Panc1 (cell line): ENCODE measurements at regions of chr11 and their contacts with region 1.

Region 1: DNA sequence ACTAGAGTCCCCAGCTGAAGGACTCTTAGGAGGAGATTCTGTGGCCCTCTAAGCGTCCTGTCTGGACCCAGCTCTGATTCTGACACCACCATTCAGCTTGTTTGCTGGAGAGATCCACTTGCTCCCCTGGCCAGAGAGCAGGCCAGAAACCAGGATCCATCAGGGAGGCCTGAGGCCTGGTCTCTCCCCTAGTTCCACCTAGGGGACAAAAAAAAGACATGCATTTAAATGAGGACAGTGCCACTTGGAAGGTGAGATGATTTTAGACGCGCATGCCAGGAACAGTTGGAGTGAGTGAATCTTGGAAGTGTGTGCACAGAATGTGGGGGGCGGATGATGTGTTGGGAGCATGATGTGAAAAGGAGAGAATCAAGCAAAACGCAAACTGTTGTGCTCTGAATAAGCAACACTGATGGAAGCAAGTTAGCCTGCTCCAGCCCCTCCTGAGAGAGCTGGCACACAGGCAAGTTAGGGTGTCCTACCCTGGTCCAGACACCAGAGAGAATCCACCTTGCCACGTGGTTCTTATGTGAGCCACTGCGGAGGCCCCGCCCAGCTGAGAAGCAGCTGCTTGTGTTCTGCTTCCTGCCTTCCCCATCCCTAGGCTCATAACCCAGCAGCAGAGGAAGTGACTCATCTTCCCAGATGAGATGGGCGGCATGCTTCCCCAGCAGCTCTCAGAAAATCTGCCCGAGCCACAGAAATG is 8.0 kb upstream of the SLCO2B1 start:
- DNase-seq: peak; percentile 68
- ATAC-seq: peak; percentile 87
- H3K4me3 ChIP-seq: no peak overlapping the region
- H3K27ac ChIP-seq: no peak overlapping the region; the same call in 1 of the 2 replicates
- H3K4me1 ChIP-seq: peaks cover 10% of the 10 kb centered on the region
- H3K27me3 ChIP-seq: no peaks in the 10 kb centered on the region; the same call in 1 of the 2 replicates
- CTCF ChIP-seq: no peak

Region 2: DNA sequence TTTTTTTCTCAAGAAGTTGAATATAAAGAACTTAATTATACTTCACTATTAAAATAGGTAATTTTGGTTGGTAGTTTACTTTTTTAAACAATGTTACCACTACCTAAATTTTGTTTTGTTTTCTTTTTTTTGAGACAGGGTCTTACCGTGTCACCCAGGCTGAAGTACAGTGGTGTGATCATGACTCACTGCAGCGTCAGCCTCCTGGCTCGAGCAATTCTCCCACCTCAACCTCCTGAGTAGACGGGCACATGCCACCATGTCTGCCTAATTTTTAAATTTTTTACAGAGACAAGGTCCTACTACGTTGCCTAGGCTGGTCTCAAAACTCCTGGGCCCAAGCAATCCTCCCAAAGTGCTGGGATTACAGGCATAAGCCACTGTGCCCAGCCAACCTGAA is 176.2 kb before region 1 on chr11:
- CTCF ChIA-PET with region 1: no interaction called
- POLR2A ChIA-PET with region 1: no interaction called
- in situ Hi-C with region 1: no loop called
- intact Hi-C with region 1: no loop called
- DNase-seq: peak; percentile 57
- ATAC-seq: peak; percentile 81
- H3K4me3 ChIP-seq: no peak overlapping the region
- H3K27ac ChIP-seq: no peak overlapping the region
- H3K4me1 ChIP-seq: no peaks in the 10 kb centered on the region
- H3K27me3 ChIP-seq: no peaks in the 10 kb centered on the region
- CTCF ChIP-seq: no peak

Region 3: GRCh38 chr11:75100314-75100713 is 42.6 kb before region 1 on chr11:
- CTCF ChIA-PET with region 1: no interaction called
- POLR2A ChIA-PET with region 1: no interaction called
- in situ Hi-C with region 1: no loop called
- intact Hi-C with region 1: no loop called
- DNase-seq: no peak
- ATAC-seq: peak; percentile 82
- H3K4me3 ChIP-seq: no peak overlapping the region
- H3K27ac ChIP-seq: no peak overlapping the region
- H3K4me1 ChIP-seq: no peaks in the 10 kb centered on the region
- H3K27me3 ChIP-seq: peaks cover 6% of the 10 kb centered on the region
- CTCF ChIP-seq: no peak

Region 4: DNA sequence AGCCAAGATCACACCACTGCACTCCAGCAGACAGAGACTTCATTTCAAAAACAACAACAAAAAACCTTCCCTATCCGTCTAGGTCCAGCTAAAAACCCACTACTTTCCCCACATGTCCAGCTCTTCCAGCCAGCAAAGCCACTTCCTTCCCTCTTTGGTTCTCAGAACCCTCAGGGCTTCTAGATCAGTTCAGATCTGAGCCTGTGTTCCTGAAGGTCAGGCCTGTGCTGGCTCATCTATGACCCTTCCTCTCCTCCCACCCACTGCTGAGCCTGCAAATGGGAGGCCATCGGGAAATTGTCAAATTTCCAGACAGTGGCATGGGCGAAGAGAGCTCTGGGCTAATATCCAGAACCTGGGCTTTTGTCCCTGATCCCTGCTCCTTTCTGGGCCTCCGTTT is 45.8 kb after region 1 on chr11:
- CTCF ChIA-PET with region 1: interaction called, 3 read pairs
- POLR2A ChIA-PET with region 1: interaction called, 10 read pairs
- in situ Hi-C with region 1: no loop called
- intact Hi-C with region 1: no loop called
- DNase-seq: no peak
- ATAC-seq: no peak
- H3K4me3 ChIP-seq: no peak overlapping the region
- H3K27ac ChIP-seq: no peak overlapping the region
- H3K4me1 ChIP-seq: no peaks in the 10 kb centered on the region
- H3K27me3 ChIP-seq: 0 out of 2 replicates have a peak, but pooled peaks cover 3% of the 10 kb centered on the region
- CTCF ChIP-seq: no peak

Region 5: GRCh38 chr11:75204685-75205563 is 62.1 kb after region 1 on chr11:
- CTCF ChIA-PET with region 1: interaction called, 59 read pairs
- POLR2A ChIA-PET with region 1: interaction called, 5 read pairs
- in situ Hi-C with region 1: no loop called
- intact Hi-C with region 1: loop called (anchors 2 kb)
- DNase-seq: peak; percentile 38
- ATAC-seq: peak; percentile 95
- H3K4me3 ChIP-seq: no peak overlapping the region
- H3K27ac ChIP-seq: no peak overlapping the region
- H3K4me1 ChIP-seq: no peaks in the 10 kb centered on the region
- H3K27me3 ChIP-seq: peaks cover 32% of the 10 kb centered on the region
- CTCF ChIP-seq: peak; percentile 96

Region 6: DNA sequence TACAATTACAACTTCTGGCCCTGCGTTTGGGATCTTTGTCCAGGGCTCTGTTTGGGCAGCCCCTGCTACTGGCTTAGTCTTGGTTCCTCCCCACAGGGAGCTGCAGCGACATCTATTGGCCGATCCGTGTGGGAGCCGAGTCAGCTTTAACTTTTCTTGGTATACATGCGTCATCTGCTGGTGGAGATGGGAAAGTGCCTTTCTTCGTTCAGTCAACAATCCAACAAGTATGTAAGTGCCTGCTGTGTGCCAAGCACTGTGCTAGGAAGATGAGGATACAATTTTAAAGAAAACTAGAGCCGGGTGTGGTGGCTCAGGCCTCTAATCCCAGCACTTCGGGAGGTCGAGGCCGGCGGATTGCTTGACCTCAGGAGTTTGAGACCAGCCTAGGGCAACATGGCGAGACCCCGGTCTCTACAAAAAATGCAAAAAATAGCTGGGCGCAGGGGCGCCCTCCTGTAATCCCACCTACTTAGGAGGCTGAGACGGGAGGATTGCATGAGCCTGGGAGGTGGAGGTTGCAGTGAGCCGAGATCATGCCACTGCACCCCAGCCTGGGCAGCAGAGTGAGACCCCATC is 105.9 kb after region 1 on chr11:
- CTCF ChIA-PET with region 1: interaction called, 83 read pairs
- POLR2A ChIA-PET with region 1: no interaction called
- in situ Hi-C with region 1: no loop called
- intact Hi-C with region 1: loop called (anchors 2 kb)
- DNase-seq: peak; percentile 89
- ATAC-seq: peak; percentile 88
- H3K4me3 ChIP-seq: no peak overlapping the region
- H3K27ac ChIP-seq: no peak overlapping the region
- H3K4me1 ChIP-seq: peaks cover 3% of the 10 kb centered on the region; the same call in 1 of the 2 replicates
- H3K27me3 ChIP-seq: no peaks in the 10 kb centered on the region
- CTCF ChIP-seq: peak; percentile 100